A549 (cell line): ENCODE measurements at regions of chr9 and their contacts with region 1.

Region 1: DNA sequence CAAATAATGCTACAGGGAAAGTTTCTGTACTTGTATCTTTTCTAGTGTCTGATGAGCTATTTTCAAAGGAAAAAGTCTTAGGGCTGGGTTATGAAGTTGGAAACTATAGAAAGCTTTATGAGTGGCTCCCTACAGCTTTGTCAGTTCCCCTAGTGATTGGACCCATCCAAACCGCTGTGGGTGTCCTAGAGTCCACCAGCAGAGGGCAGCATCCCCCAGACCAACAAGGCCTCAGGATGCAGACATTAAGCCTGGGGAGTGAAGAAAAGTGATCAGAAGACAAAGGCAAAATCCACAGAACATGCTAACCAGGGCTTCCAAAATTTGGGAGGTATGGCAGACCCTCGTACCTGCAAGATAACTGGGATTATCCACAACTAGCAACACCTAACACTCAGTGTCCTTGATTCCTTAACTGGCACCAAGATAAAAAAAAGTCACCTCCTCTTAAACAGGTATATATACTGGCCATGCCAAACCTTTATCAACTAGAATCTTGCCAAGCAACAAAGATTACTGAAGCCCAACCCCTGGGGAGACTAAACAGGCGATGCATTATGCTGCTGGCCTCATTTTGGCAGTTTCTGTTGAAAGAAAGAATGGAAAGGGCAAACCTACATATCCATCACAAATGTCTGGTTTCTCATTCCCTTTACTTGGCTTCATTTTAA is 110.4 kb upstream of the NR5A1 start:
- DNase-seq: peak; percentile 78 to 87
- ATAC-seq: peak; percentile 98 to 99
- H3K4me3 ChIP-seq: no peak overlapping the region
- H3K27ac ChIP-seq: peak overlapping the region; percentile 28 to 70; a peak in 4 of 6 replicates
- H3K4me1 ChIP-seq: peaks cover 15% of the 10 kb centered on the region
- CTCF ChIP-seq: peak; percentile 96
- EP300 ChIP-seq: no peak
- POLR2A ChIP-seq: no peak
- RAD21 ChIP-seq: peak; percentile 95 to 98

Region 2: GRCh38 chr9:124551472-124552272 is 65.9 kb before region 1 on chr9:
- CTCF ChIA-PET with region 1: interaction called, 42 read pairs
- POLR2A ChIA-PET with region 1: interaction called, 4 read pairs
- DNase-seq: peak; percentile 66 to 72
- ATAC-seq: peak; percentile 96
- H3K4me3 ChIP-seq: no peak overlapping the region
- H3K27ac ChIP-seq: 0 out of 6 replicates have a peak overlapping the region, but pooled peaks of 1 of the 2 experiments have one; percentile 1
- H3K4me1 ChIP-seq: peaks cover 10% of the 10 kb centered on the region; the same call in 2 of the 3 replicates
- CTCF ChIP-seq: peak; percentile 77
- EP300 ChIP-seq: no peak
- POLR2A ChIP-seq: no peak
- RAD21 ChIP-seq: peak; percentile 73 to 82

Region 3: GRCh38 chr9:124602204-124602603 is 15.4 kb before region 1 on chr9:
- CTCF ChIA-PET with region 1: interaction called, 63 read pairs
- POLR2A ChIA-PET with region 1: no interaction called
- DNase-seq: peak in 1 of 2 experiments; percentile 23
- ATAC-seq: no peak
- H3K4me3 ChIP-seq: no peak overlapping the region
- H3K27ac ChIP-seq: no peak overlapping the region
- H3K4me1 ChIP-seq: peaks cover 9% of the 10 kb centered on the region; the same call in 2 of the 3 replicates
- CTCF ChIP-seq: no peak
- EP300 ChIP-seq: no peak
- POLR2A ChIP-seq: no peak
- RAD21 ChIP-seq: no peak

Region 4: DNA sequence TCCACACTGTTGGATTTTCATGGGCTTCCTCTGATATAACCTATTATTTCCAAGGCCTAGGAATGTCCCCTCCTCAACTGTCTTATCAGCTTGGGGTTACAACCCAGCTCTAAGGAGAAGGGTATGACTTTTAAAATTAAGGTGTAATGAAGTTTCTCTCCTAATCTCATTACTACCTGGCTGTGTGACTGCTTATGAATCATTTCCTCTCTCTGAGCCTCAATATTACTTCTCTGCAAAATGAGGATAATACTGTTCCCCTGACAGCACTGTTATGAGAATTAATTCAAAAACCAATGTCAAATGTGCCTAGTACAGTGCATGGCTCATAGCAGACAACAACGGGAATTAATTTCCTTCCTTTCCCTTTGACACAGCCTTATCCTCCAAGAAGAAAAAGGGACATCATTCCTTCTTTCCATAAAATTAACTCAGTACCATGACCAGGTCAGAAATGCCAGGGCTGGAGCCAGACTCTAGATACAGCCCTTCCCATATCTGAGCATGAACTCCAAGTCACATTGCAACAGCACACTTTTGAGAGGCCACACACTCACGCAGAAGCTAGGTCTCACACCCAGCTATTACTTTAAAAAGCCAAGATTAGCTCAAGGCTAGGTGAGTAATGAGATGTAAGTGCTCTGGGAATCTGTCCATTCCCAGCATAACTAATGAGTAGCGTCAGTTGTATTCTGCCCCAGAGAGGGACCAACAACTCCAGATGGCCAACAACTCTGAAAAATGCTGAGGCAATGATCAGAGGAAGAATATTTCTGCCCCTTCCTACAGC is 34.8 kb after region 1 on chr9:
- CTCF ChIA-PET with region 1: interaction called, 37 read pairs
- POLR2A ChIA-PET with region 1: no interaction called
- DNase-seq: peak; percentile 48 to 75
- ATAC-seq: peak; percentile 90 to 91
- H3K4me3 ChIP-seq: no peak overlapping the region
- H3K27ac ChIP-seq: peak overlapping the region in 1 of 2 experiments; percentile 74; a peak in 3 of 6 replicates
- H3K4me1 ChIP-seq: peaks cover 19% of the 10 kb centered on the region
- CTCF ChIP-seq: no peak
- EP300 ChIP-seq: peak in 1 of 2 experiments; percentile 29; a peak in 1 of 5 replicates
- POLR2A ChIP-seq: no peak
- RAD21 ChIP-seq: no peak

Region 5: DNA sequence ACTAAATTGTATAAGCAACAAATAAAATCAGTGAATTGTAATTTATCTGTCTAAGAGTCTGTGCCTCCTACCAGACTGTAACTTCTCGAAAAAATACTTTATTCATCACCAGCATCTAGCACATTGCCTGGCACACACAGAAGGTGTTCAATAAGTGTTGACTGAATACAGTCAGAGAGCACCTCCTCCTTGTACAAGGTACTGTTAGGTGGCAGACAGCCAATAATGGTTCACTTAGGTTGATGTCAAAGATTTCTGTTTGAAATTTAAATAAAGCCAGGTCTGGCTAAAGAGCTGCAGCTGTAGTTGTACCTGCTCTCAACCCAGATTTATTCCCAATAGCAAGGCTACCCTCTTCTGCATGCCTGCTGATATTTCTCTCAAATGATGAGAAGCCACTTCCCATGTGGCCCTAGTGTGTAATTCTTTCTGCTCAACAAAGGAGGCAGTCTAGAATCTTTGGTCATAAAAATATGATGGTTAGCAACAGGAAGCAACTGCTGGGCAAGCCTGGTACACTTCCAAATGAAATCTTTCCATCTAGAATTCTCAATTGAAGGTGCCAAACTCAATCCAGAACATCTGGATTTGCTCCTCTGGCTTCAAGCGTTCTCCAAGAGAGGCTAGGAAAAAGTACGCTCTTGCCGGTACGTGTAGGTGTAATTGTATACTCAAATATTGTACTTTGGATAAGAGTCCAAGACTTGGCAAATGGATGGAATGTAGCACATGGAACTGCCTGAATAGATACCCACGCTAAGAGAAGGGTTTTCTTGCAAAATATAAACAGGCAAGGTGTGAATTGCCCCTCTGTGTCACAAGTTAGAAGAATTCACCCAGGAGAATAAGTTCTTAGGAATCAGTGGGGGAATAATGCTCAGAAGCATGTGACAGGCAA is 57.9 kb after region 1 on chr9:
- CTCF ChIA-PET with region 1: interaction called, 16 read pairs
- POLR2A ChIA-PET with region 1: no interaction called
- DNase-seq: no peak
- ATAC-seq: peak; percentile 47 to 67; a peak in 3 of 6 replicates
- H3K4me3 ChIP-seq: no peak overlapping the region
- H3K27ac ChIP-seq: no peak overlapping the region
- H3K4me1 ChIP-seq: peaks cover 16% of the 10 kb centered on the region; the same call in 2 of the 3 replicates
- CTCF ChIP-seq: no peak
- EP300 ChIP-seq: no peak
- POLR2A ChIP-seq: no peak
- RAD21 ChIP-seq: no peak

Region 6: DNA sequence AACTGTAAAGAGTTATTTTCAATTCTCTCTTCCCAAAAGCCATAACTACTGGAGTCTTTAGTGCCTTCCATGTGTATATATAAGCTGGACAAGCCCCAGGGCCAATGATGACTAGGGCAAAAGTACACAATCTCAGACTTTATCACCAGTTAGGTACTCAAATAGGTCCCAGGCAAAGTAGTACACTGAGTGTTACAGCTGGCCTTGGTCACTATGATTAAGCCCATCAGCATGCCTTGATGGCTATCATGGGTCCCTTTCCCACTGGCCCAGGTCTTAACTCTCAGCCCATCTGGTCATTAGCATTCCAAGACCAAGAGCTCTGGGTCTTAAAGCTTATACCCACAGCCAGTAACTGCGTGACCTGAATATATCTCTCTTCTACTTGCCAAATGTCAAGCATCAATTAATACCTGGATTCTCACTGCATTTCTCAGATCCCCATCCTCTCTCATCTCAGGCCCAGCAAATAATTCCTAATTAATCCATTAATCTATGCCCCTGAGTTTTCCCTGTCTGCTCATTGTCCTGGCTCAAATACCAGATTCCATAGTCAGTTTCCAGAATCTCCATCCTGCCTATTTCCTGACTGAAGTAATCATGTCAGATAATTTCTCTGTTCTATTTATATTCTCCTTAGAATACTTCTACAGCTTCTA is 91.2 kb after region 1 on chr9:
- CTCF ChIA-PET with region 1: interaction called, 235 read pairs
- POLR2A ChIA-PET with region 1: no interaction called
- DNase-seq: peak in 1 of 2 experiments; percentile 41
- ATAC-seq: peak in 1 of 2 experiments; percentile 66; a peak in 3 of 6 replicates
- H3K4me3 ChIP-seq: no peak overlapping the region
- H3K27ac ChIP-seq: peak overlapping the region in 1 of 2 experiments; percentile 47; a peak in 2 of 6 replicates
- H3K4me1 ChIP-seq: peaks cover 21% of the 10 kb centered on the region
- CTCF ChIP-seq: no peak
- EP300 ChIP-seq: no peak
- POLR2A ChIP-seq: no peak
- RAD21 ChIP-seq: no peak

Region 7: GRCh38 chr9:124764774-124765438 is 147.3 kb after region 1 on chr9:
- CTCF ChIA-PET with region 1: interaction called, 36 read pairs
- POLR2A ChIA-PET with region 1: no interaction called
- DNase-seq: peak; percentile 50 to 53
- ATAC-seq: peak; percentile 54 to 76; a peak in 4 of 6 replicates
- H3K4me3 ChIP-seq: no peak overlapping the region
- H3K27ac ChIP-seq: no peak overlapping the region
- H3K4me1 ChIP-seq: peaks cover 22% of the 10 kb centered on the region; the same call in 2 of the 3 replicates
- CTCF ChIP-seq: peak; percentile 50
- EP300 ChIP-seq: no peak
- POLR2A ChIP-seq: no peak
- RAD21 ChIP-seq: peak; percentile 53 to 61